Testis (tissue), 5 donors: ENCODE measurements at regions of chr13 and their contacts with region 1.

Region 1: GRCh38 chr13:49652355-49653305 is 24.3 kb downstream of the ARL11 start:
- DNase-seq: peak; percentile 60
- H3K4me3 ChIP-seq: no peak overlapping the region
- H3K27ac ChIP-seq: no peak overlapping the region
- H3K4me1 ChIP-seq: no peaks in the 10 kb centered on the region
- H3K27me3 ChIP-seq: no peaks in the 10 kb centered on the region
- CTCF ChIP-seq: peak; percentile 13 to 43 (median 27)
- POLR2A ChIP-seq: no peak

Region 2: DNA sequence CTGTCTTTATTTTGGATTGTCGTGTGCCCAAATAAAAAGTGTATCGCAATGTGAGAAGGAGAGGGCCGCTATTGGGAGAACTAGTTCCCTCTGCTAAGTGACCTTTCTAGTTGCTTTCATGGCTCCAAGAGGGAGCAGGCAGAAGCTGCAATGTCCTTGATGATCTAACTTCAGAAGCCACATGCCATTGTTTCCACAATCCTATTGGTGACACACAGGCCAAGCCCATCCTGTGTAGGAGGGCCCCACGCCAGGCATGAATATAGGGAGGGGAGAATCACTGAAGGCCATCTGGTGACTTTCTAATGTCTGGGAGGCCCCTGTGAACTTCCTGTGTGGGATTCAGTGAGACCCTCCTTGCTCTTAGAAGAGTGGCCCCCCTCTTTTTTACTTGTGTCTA is 187.6 kb after region 1 on chr13:
- intact Hi-C with region 1: loop called (anchors 10 kb)
- DNase-seq: no peak
- H3K4me3 ChIP-seq: no peak overlapping the region
- H3K27ac ChIP-seq: no peak overlapping the region
- H3K4me1 ChIP-seq: no peaks in the 10 kb centered on the region
- H3K27me3 ChIP-seq: no peaks in the 10 kb centered on the region
- CTCF ChIP-seq: no peak
- POLR2A ChIP-seq: no peak